HCT116 (cell line): ENCODE measurements at regions of chr3 and their contacts with region 1.

Region 1: GRCh38 chr3:172595641-172596393 is 72.6 kb upstream of the TNFSF10 start:
- DNase-seq: peak; percentile 48
- ATAC-seq: peak; percentile 92
- H3K4me3 ChIP-seq: peak overlapping the region; percentile 9 to 19; a peak in 2 of 4 replicates
- H3K27ac ChIP-seq: no peak overlapping the region
- H3K4me1 ChIP-seq: 0 out of 4 replicates have a peak, but pooled peaks cover 0 to 4% of the 10 kb centered on the region in 2 experiments
- H3K27me3 ChIP-seq: no peaks in the 10 kb centered on the region
- CTCF ChIP-seq: peak; percentile 78 to 88 (median 87)
- POLR2A ChIP-seq: no peak
- RAD21 ChIP-seq: peak; percentile 91

Region 2: GRCh38 chr3:172542089-172542488 is 53.7 kb before region 1 on chr3:
- CTCF ChIA-PET with region 1: interaction called, 10 read pairs
- POLR2A ChIA-PET with region 1: no interaction called
- RAD21 ChIA-PET with region 1: no interaction called
- intact Hi-C with region 1: no loop called
- DNase-seq: no peak
- ATAC-seq: no peak
- H3K4me3 ChIP-seq: no peak overlapping the region
- H3K27ac ChIP-seq: peak overlapping the region; percentile 50; the same call in 1 of the 2 replicates
- H3K4me1 ChIP-seq: peaks cover 29% of the 10 kb centered on the region in 2 experiments
- H3K27me3 ChIP-seq: no peaks in the 10 kb centered on the region
- CTCF ChIP-seq: no peak
- POLR2A ChIP-seq: no peak
- RAD21 ChIP-seq: no peak

Region 3: GRCh38 chr3:172666873-172667694 is 71.3 kb after region 1 on chr3:
- CTCF ChIA-PET with region 1: interaction called, 3 read pairs
- POLR2A ChIA-PET with region 1: no interaction called
- RAD21 ChIA-PET with region 1: no interaction called
- intact Hi-C with region 1: loop called (anchors 2 kb)
- DNase-seq: peak; percentile 67
- ATAC-seq: peak; percentile 100
- H3K4me3 ChIP-seq: no peak overlapping the region
- H3K27ac ChIP-seq: no peak overlapping the region
- H3K4me1 ChIP-seq: peaks cover 0 to 9% of the 10 kb centered on the region in 2 experiments; a peak in 1 of 4 replicates
- H3K27me3 ChIP-seq: no peaks in the 10 kb centered on the region
- CTCF ChIP-seq: peak; percentile 79 to 90 (median 85)
- POLR2A ChIP-seq: no peak
- RAD21 ChIP-seq: peak; percentile 94